ENCODE measurements at regions of chr16 and their contacts with region 1.

Region 1: DNA sequence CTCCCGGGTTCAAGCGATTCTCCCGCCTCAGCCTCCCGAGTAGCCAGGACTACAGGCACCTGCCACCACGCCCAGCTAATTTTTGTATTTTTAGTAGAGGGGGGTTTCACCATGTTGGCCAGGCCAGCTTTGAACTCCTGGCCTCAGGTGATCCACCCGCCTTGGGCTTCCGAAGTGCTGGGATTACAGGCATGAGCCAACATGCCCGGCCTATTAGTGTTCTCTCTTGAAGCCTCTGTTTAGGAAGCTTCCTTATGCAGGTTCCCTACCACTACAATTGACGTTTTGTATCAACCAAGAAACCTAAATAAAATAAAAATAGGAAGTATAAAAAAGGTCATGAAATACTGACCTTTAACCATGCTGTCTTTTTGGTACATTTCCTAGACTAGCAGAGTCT is 16.0 kb downstream of the CHST5 start:
- DNase-seq: no peak
- H3K4me3 ChIP-seq: no peak overlapping the region
- H3K27ac ChIP-seq: no peak overlapping the region
- H3K4me1 ChIP-seq: no peaks in the 10 kb centered on the region
- H3K27me3 ChIP-seq: no peaks in the 10 kb centered on the region
- CTCF ChIP-seq: no peak

Region 2: DNA sequence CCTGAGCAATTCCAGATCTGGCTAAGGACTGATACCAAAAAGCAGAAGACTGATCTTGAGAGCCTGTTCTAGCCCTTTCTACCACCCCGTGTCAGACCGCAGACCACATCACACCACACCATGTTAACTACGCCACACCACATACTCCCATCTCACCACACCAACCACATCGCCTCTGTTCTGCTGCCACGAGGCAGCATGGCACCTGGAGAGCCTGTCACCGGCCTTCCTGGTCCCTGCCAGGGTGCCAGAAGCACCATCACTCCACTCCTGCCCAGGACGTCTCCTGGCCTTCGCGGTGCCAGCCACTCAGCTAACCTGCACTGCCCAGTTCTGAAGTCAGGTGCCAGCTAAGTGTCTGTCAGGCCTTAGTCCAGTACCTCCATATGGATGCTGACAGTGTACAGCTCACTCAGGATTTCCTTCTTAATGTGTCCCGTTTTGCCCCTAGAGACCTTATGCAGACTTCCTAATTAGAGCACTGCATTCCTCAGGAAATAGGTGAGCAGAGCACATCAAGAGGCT is 231.2 kb before region 1 on chr16:
- CTCF ChIA-PET with region 1: no interaction called
- POLR2A ChIA-PET with region 1: interaction called, 11 read pairs
- intact Hi-C with region 1: no loop called
- DNase-seq: no peak
- H3K4me3 ChIP-seq: no peak overlapping the region
- H3K27ac ChIP-seq: no peak overlapping the region
- H3K4me1 ChIP-seq: peaks cover 15% of the 10 kb centered on the region
- H3K27me3 ChIP-seq: no peaks in the 10 kb centered on the region
- CTCF ChIP-seq: no peak

Region 3: GRCh38 chr16:75471723-75472633 is 47.9 kb before region 1 on chr16:
- CTCF ChIA-PET with region 1: interaction called, 5 read pairs
- POLR2A ChIA-PET with region 1: no interaction called
- intact Hi-C with region 1: loop called (anchors 1 kb)
- DNase-seq: peak; percentile 70
- H3K4me3 ChIP-seq: no peak overlapping the region
- H3K27ac ChIP-seq: no peak overlapping the region
- H3K4me1 ChIP-seq: no peaks in the 10 kb centered on the region
- H3K27me3 ChIP-seq: no peaks in the 10 kb centered on the region
- CTCF ChIP-seq: peak; percentile 88

Region 4: DNA sequence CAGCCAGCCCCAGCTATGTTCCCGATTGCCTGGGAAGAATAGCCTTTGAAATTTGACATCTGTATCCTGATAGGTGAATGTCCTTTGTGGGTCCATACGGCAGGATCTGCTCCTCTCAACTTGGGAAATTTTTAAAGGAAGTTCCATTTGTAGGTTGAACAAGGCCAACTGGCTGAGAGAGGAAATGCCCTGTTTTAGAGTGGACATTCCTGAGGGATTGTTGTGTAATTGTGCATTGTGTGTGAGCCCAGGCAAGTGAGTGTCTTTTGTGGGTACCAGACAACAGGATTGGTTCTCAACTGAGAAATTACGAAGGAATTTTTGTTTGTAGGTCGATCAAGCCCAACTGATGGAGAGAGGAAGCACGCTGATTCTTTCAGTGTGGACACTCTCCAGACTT is 159.5 kb after region 1 on chr16:
- CTCF ChIA-PET with region 1: no interaction called
- POLR2A ChIA-PET with region 1: no interaction called
- intact Hi-C with region 1: no loop called
- DNase-seq: no peak
- H3K4me3 ChIP-seq: no peak overlapping the region
- H3K27ac ChIP-seq: no peak overlapping the region
- H3K4me1 ChIP-seq: no peaks in the 10 kb centered on the region
- H3K27me3 ChIP-seq: no peaks in the 10 kb centered on the region
- CTCF ChIP-seq: no peak